ENCODE measurements at regions of chr11 and their contacts with region 1.

Region 1: GRCh38 chr11:35391922-35392813 is 27.2 kb downstream of the SLC1A2 start:
- DNase-seq: peak; percentile 94
- H3K4me3 Mint-ChIP-seq: peak overlapping the region; percentile 66
- H3K27ac Mint-ChIP-seq: peak overlapping the region; percentile 24
- H3K4me1 Mint-ChIP-seq: peaks cover 24% of the 10 kb centered on the region
- H3K27me3 Mint-ChIP-seq: peaks cover 14% of the 10 kb centered on the region

Region 2: GRCh38 chr11:34585735-34586487 is 806.3 kb before region 1 on chr11:
- intact Hi-C with region 1: loop called (anchors 1 kb)
- DNase-seq: peak; percentile 57
- H3K4me3 Mint-ChIP-seq: no peak overlapping the region
- H3K27ac Mint-ChIP-seq: no peak overlapping the region
- H3K4me1 Mint-ChIP-seq: no peaks in the 10 kb centered on the region
- H3K27me3 Mint-ChIP-seq: peaks cover 40% of the 10 kb centered on the region

Region 3: GRCh38 chr11:34916015-34916842 is 475.9 kb before region 1 on chr11 and contains the starts of genes APIP and PDHX:
- intact Hi-C with region 1: loop called (anchors 2 kb)
- DNase-seq: peak; percentile 98
- H3K4me3 Mint-ChIP-seq: peak within 1 kb of the TSS; percentile 98
- H3K27ac Mint-ChIP-seq: peak within 1 kb of the TSS; percentile 95
- H3K4me1 Mint-ChIP-seq: peaks cover 25% of the 10 kb centered on the region
- H3K27me3 Mint-ChIP-seq: no peaks in the 10 kb centered on the region
- total RNA-seq, gene APIP: 26.8 and 29.6 TPM in 2 replicates
- total RNA-seq, gene PDHX: 31.0 and 35.7 TPM in 2 replicates

Region 4: GRCh38 chr11:34997952-34998528 is 394.1 kb before region 1 on chr11:
- intact Hi-C with region 1: loop called (anchors 1 kb)
- DNase-seq: no peak
- H3K4me3 Mint-ChIP-seq: peak overlapping the region; percentile 6
- H3K27ac Mint-ChIP-seq: peak overlapping the region; percentile 5
- H3K4me1 Mint-ChIP-seq: peaks cover 17% of the 10 kb centered on the region
- H3K27me3 Mint-ChIP-seq: no peaks in the 10 kb centered on the region

Region 5: DNA sequence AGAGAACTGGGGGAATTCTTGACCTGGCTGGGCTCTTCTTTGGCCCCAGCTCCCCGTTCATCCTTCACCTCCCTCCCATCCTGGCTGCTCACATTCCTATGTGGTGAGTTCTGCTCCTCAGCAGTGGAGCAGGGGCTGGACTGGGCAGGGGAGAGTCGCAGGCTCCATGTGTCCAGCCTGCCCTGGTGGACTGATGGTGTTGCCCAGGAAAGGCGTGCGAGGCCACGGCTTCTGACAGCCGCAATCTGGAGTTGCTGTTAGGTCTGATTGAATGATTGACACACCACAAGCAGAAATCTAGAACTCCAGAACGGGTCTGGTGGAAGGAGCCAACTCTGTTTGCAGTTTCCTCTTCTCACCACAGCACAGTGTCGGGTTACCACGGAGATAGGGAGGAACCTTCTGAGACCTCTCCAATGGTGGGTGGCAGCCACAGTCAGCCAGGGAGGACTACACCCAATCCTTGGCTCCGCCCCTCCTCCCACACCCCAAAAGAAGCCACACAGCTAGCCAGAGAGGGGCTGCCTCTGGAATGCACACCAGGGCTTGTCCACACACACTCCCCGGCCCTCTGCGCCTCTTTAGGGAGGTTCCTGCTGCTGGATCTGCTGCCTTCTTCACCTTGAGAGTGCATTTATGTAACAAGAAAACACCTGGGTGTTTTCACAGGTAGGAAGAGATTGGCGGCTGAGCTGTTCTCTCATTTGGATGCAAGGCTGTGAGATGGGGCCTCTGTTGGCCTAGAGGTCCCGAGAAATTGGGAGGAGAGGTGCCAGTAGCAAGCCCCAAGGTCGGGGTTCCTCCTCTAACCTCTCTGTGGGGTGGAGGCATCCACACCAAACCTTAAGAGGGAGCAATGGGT is 309.6 kb before region 1 on chr11:
- intact Hi-C with region 1: loop called (anchors 2 kb)
- DNase-seq: peak; percentile 96
- H3K4me3 Mint-ChIP-seq: peak overlapping the region; percentile 73
- H3K27ac Mint-ChIP-seq: peak overlapping the region; percentile 86
- H3K4me1 Mint-ChIP-seq: peaks cover 78% of the 10 kb centered on the region
- H3K27me3 Mint-ChIP-seq: peaks cover 1% of the 10 kb centered on the region

Region 6: DNA sequence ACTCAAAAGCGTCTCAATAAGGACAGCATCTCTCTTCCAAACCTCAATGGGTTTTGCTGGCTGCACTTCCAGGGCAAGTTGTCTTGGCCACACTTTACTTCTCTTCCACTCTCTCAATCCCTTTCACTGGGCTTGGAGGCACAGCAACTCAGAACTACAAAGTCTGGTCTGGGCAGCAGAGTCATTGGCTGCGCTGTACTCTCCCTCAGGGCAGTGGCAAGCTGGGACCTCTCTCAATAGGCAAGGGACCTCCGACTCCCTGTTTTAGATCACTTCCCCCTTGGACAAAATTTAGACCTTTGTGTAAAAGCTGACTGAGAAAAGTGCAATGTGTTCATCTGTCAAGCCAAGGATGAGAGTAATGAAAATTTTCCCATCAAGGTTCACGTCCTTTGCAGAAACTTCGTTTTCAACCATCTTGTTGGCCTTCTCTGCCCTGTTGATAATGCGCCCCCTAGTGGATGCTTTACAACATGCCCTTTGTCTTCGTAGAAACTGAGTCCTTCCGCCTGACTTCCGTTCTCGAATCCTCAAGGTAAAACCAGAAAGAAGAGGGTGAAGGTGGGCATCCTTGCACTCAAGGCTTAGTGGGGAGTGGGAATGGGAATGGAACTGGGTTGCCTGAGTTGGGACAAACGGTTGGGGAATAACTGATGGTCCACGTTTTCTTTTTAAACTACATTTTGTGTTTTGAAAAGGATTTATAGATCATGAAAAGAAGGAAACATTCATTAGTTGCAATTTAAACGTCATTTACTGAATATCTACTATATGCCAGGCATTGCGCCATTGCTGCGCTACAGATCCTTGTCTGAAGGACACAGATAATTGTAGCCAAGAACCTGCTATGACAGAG is 154.1 kb before region 1 on chr11:
- intact Hi-C with region 1: loop called (anchors 2 kb)
- DNase-seq: peak; percentile 88
- H3K4me3 Mint-ChIP-seq: peak overlapping the region; percentile 33
- H3K27ac Mint-ChIP-seq: no peak overlapping the region
- H3K4me1 Mint-ChIP-seq: peaks cover 69% of the 10 kb centered on the region
- H3K27me3 Mint-ChIP-seq: peaks cover 7% of the 10 kb centered on the region

Region 7: GRCh38 chr11:35343033-35343598 is 49.1 kb before region 1 on chr11:
- intact Hi-C with region 1: loop called (anchors 1 kb)
- DNase-seq: peak; percentile 92
- H3K4me3 Mint-ChIP-seq: peak overlapping the region; percentile 68
- H3K27ac Mint-ChIP-seq: peak overlapping the region; percentile 89
- H3K4me1 Mint-ChIP-seq: peaks cover 37% of the 10 kb centered on the region
- H3K27me3 Mint-ChIP-seq: peaks cover 3% of the 10 kb centered on the region

Measured in activated CD4-positive, alpha-beta T cell treated with anti-CD3 and anti-CD28 coated beads, Interleukin-2, amount 10 ng/mL, durations not matched to agents 24 days and 14 days (primary cell).